Colonic mucosa (tissue), 4 donors: ENCODE measurements at regions of chr21 and their contacts with region 1.

Region 1: DNA sequence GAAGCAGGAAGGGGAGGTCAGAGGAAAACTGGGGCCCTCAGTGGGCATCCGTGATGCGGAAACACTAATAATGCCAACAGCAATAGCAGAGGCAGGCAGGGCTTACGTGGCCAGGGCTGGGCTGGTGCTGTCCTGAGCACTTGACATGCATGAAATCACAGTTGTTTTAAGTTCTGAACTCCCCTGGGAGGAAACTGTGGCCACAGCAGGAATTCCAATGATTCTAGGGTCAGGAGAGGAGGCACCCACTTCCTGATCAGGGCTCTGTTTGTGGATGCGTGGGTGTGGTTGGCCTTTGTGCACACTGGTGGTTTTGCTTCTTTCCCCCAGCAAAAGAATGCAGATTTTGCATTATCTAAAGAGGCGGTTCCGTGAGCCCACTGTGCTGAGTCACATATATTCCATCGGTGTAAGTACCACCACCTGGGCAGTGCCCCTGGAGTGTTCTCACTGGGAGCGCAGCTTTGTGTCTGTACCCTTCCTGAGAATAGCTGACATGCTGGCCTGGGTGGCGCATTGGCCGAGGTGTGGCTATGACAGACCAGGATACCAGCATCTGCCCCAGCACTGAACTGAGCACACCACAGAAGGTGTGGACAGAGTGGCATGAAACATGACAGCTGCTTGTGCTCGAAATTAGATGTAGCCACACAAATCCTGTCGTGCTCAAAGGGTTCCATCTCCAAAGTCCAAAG is 71.0 kb downstream of the PDE9A start:
- DNase-seq: peak; percentile 78
- H3K4me3 ChIP-seq: no peak overlapping the region
- H3K27ac ChIP-seq: peak overlapping the region; percentile 25
- H3K4me1 ChIP-seq: peaks cover 25% of the 10 kb centered on the region
- H3K27me3 ChIP-seq: no peaks in the 10 kb centered on the region
- CTCF ChIP-seq: no peak

Region 2: DNA sequence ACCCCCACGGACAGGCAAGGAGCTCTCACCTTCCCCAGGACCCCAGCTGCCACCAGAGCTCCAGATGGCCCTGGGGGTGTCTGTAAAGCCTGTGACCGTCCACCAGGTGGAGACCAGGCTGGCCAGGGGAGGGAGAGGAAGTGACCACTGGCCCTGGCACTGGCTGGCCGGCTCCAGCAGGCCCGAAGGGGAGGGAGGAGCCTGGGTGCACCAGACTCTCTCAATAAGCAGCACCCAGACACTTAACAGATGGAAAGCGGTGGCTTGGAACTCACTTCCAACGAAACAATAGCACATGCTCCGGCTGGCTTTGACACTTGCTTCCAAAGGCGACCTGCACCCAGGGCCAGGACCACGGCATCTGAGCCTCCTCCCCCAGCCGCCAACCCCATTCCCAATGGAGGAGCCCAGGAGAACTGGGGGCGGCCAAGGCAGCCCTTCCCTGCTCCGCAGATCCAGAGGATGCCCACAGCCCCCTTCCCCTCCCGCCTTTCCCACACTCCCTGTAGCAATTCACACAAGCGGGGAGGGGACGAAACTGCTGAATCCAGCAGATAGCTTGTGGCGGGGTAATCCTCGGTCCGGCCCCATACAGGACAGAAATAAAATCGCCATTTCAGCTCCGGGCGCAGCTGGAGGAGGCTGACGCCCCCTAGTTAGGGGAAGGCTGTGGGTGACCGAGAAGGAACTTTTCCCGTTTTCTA is 71.7 kb before region 1 on chr21:
- intact Hi-C with region 1: loop called (anchors 5 kb)
- DNase-seq: peak; percentile 53
- H3K4me3 ChIP-seq: peak overlapping the region; percentile 19
- H3K27ac ChIP-seq: peak overlapping the region; percentile 27
- H3K4me1 ChIP-seq: peaks cover 14% of the 10 kb centered on the region
- H3K27me3 ChIP-seq: no peaks in the 10 kb centered on the region
- CTCF ChIP-seq: peak; percentile 18

Region 3: GRCh38 chr21:42760951-42761680 is 36.7 kb after region 1 on chr21:
- intact Hi-C with region 1: no loop called
- DNase-seq: no peak
- H3K4me3 ChIP-seq: no peak overlapping the region
- H3K27ac ChIP-seq: no peak overlapping the region
- H3K4me1 ChIP-seq: no peaks in the 10 kb centered on the region
- H3K27me3 ChIP-seq: no peaks in the 10 kb centered on the region
- CTCF ChIP-seq: no peak